ENCODE measurements at regions of chr18 and their contacts with region 1.

Region 1: GRCh38 chr18:49561289-49562193 is at the start of gene LIPG:
- DNase-seq: no peak
- H3K4me3 ChIP-seq: peak within 1 kb of the TSS; percentile 46
- CTCF ChIP-seq: no peak

Region 2: DNA sequence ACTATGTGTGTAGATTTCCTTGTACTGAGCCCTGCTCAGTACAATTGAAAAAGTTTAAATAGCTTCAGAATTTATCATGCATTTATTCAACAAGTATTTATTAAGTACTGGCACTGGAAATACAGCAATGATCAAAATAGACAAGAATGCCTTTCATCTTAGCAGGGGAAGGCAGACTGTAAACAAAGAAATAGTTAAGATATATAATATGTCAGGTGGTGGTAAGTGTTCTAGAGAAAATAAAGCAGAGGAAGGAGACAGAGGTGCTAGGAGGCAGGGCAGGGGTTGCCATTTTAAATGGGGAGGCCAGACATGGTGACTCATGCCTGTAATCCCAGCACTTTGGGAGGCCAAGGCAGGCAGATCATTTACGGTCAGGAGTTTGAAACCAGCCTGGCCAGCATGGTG is 13.3 kb before region 1 on chr18:
- CTCF ChIA-PET with region 1: interaction called, 15 read pairs
- POLR2A ChIA-PET with region 1: no interaction called
- DNase-seq: no peak
- H3K4me3 ChIP-seq: no peak overlapping the region
- CTCF ChIP-seq: no peak

Region 3: DNA sequence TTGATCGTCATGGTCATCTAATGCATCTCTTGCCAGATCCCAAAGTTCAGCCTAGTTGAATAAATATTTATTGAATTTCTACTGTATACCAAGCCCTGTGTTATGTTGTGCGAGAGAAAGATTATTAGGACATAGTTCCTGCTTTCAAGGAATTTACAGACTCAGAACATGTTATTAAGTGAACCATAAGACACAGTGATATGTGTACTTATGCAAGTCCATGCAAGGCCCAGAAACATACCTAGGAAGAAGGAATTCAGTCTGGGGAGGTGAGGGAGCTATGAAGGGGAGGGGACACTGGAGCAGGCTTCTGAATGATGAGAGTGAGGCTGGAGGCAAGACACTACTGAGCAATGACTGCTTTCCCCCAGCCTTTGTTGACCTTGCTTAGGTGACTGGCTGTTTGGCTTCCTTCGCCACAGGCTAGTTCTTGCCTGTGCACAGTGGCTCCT is 170.3 kb after region 1 on chr18:
- CTCF ChIA-PET with region 1: interaction called, 10 read pairs
- POLR2A ChIA-PET with region 1: no interaction called
- DNase-seq: no peak
- H3K4me3 ChIP-seq: no peak overlapping the region
- CTCF ChIP-seq: no peak

Region 4: DNA sequence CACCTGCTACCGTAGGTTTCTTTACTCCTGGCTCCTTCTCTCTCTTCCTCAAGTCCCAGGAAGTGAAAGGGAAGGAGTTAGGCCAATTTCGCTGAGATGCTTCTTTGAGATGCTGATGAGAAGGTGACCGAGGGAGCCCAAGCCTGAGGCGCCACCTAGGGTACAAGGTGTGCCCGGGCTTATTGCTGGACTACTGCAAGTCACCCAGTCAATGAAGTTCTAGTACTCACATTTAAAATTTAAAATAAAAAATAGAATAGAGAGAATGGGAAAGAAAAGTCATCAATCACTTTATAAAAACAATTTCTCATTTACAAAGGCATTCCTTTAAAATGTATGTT is 206.5 kb after region 1 on chr18:
- CTCF ChIA-PET with region 1: interaction called, 109 read pairs
- POLR2A ChIA-PET with region 1: no interaction called
- DNase-seq: no peak
- H3K4me3 ChIP-seq: no peak overlapping the region
- CTCF ChIP-seq: peak; percentile 79

Region 5: DNA sequence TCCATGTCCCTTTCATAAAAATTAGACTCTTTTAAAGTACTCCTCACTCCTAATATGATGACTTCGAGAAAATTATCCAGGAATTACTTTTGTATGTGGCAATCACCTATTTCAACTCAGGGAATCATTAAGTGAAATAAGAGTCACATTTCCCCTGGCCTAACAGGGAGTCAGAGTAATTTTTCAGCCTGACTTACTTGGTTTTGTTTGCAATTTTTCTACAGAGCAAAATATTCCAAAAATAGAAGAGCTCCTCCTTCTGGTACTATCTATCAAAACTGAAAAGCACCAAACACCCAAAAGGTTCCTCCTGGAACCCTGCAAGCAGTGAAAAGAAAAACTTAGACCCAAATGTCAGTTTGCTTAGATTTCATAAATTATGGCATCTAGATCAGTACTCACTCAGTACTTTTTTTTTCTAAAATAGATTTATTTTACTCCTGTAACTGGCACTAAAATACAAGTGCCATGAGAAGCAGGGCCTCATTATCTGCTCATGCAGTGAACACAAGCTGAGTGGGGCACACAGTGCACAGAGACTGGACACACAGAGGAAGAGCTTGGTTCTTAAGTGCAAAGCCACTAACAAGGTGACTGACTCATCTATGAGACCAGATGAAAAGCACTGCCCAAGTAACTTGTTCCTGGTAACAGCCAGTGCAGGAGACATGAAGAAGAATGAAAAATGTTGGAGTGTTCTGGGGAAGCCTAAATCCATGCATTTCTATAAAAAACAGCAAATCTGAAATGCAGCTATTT is 223.1 kb after region 1 on chr18:
- CTCF ChIA-PET with region 1: interaction called, 51 read pairs
- POLR2A ChIA-PET with region 1: no interaction called
- DNase-seq: no peak
- H3K4me3 ChIP-seq: no peak overlapping the region
- CTCF ChIP-seq: no peak

Measured in AG04449 (cell line).